ENCODE measurements at regions of chr5 and their contacts with region 1.

Region 1: DNA sequence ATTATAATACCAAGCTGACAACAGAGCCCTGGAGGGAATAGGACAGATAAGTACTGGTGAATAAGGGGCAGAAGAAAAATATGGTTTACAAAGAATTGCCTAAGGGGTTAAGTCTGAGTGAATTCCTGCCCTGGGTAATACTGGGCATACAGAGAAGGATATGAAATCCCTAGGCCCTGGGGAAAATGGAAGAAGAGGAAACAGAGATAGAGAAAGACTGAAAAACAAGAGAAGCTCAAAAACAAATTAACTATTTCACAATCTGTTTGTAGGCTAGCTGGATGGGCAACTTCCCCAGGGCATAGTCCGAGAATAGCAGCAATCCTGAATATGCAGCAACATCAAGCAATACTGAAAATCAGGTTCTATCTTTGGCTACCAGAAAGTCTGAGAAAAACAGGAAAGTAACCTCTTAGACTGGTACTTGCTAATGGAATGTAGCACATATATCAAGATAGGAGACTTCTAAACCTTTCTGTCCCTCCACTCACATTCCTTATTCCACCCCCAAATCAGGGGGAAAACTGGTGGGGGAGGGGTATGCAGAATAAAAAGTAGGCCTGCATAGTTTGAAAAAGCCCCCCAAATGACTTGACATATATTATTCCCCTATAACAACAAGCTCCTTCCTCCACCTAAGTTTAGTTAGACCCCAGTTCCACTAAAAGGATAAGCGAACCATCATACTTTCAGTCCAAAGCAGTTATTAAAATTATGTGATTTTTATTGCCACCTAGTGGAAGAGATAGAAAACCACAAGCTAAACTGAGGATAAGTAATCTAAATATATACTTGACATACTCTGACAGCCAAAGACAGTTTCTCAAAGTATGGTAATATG is 20.6 kb downstream of the SLC38A9 start:
- DNase-seq: no peak
- ATAC-seq: peak; percentile 36
- H3K4me3 Mint-ChIP-seq: no peak overlapping the region
- H3K27ac Mint-ChIP-seq: no peak overlapping the region
- H3K4me1 Mint-ChIP-seq: no peaks in the 10 kb centered on the region
- H3K27me3 Mint-ChIP-seq: no peaks in the 10 kb centered on the region

Region 2: DNA sequence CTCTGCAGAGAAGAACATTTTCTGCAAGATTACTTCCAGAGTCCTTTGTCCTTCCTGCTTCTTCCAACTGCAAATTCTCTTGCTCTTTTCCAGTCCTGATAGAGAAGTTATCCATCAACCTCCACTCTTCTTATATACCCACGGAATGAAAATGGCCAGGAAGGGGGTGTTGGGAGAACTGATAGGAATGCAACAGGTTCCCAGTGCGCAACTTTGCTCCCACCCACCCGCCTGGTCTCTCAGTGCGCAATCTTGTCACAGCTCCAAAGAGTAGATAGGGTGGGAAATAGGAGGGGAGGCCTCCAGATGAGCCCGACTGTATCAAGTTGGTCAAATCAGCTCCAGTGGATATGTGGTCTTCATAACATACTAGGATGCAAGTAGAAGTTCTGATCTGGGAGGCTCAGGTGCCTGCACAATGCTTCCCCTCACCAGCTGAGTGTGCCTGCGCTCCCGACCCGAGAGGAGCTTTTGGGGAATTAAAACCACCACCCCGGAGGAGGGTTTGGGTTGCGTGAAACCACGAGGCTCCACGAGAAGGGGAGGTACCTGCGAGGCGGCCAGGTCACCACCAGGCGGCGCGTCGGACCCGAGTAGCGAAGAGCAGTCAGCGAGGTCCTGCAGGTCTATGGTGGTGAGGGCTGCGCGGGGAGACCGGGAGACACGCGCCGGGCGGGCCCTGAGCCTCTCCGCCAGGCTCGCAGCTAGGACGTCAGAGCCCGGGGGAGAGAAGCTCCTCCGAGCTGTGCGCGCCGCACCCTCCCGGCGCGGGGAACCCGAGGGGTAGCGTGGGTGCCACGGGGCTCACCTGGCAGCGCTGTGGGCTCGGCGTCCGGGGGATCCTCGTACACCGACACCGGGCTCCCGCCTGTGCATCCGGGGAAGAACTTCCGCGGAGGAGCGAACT is 465.2 kb before region 1 on chr5:
- CTCF ChIA-PET with region 1: interaction called, 3 read pairs
- POLR2A ChIA-PET with region 1: no interaction called
- intact Hi-C with region 1: loop called in 1 of 2 experiments (anchors 1 kb)
- DNase-seq: peak; percentile 88
- ATAC-seq: peak; percentile 70
- H3K4me3 Mint-ChIP-seq: peak overlapping the region; percentile 61
- H3K27ac Mint-ChIP-seq: no peak overlapping the region
- H3K4me1 Mint-ChIP-seq: peaks cover 37% of the 10 kb centered on the region
- H3K27me3 Mint-ChIP-seq: peaks cover 78% of the 10 kb centered on the region

Region 3: GRCh38 chr5:55344392-55344992 is 347.0 kb before region 1 on chr5:
- CTCF ChIA-PET with region 1: interaction called, 32 read pairs
- POLR2A ChIA-PET with region 1: no interaction called
- intact Hi-C with region 1: loop called (anchors 1 kb)
- DNase-seq: peak; percentile 78
- ATAC-seq: no peak
- H3K4me3 Mint-ChIP-seq: no peak overlapping the region
- H3K27ac Mint-ChIP-seq: no peak overlapping the region
- H3K4me1 Mint-ChIP-seq: peaks cover 8% of the 10 kb centered on the region
- H3K27me3 Mint-ChIP-seq: no peaks in the 10 kb centered on the region

Region 4: GRCh38 chr5:55421074-55421529 is 270.4 kb before region 1 on chr5:
- CTCF ChIA-PET with region 1: interaction called, 3 read pairs
- POLR2A ChIA-PET with region 1: no interaction called
- intact Hi-C with region 1: loop called in 1 of 2 experiments (anchors 5 kb)
- DNase-seq: peak; percentile 45
- ATAC-seq: peak; percentile 99
- H3K4me3 Mint-ChIP-seq: no peak overlapping the region
- H3K27ac Mint-ChIP-seq: no peak overlapping the region
- H3K4me1 Mint-ChIP-seq: peaks cover 33% of the 10 kb centered on the region
- H3K27me3 Mint-ChIP-seq: no peaks in the 10 kb centered on the region

Region 5: DNA sequence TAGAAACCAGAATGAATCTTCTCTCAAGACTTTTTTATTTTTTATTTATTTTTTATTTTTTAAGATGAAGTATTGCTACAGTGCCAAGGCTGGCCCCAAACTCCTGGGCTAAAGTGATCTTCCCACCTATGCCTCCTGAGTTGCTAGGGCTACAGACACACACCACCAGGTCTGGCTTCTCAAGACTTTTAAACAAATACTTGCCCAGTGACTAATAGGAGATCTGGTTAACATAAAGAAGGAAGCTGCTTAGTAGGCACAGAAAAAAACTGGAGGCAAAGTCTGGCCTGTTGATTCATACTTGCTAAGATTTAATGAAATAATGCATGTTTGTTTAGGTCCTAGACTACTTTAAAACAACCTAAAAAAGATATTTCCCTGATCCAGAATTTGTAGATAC is 23.1 kb before region 1 on chr5:
- CTCF ChIA-PET with region 1: interaction called, 10 read pairs
- POLR2A ChIA-PET with region 1: no interaction called
- intact Hi-C with region 1: no loop called
- DNase-seq: no peak
- ATAC-seq: no peak
- H3K4me3 Mint-ChIP-seq: no peak overlapping the region
- H3K27ac Mint-ChIP-seq: no peak overlapping the region
- H3K4me1 Mint-ChIP-seq: no peaks in the 10 kb centered on the region
- H3K27me3 Mint-ChIP-seq: no peaks in the 10 kb centered on the region

Region 6: GRCh38 chr5:56019306-56020272 is 328.1 kb after region 1 on chr5:
- CTCF ChIA-PET with region 1: no interaction called
- POLR2A ChIA-PET with region 1: no interaction called
- intact Hi-C with region 1: no loop called
- DNase-seq: no peak
- ATAC-seq: peak; percentile 69
- H3K4me3 Mint-ChIP-seq: no peak overlapping the region
- H3K27ac Mint-ChIP-seq: peak overlapping the region; percentile 5
- H3K4me1 Mint-ChIP-seq: peaks cover 29% of the 10 kb centered on the region
- H3K27me3 Mint-ChIP-seq: no peaks in the 10 kb centered on the region